ENCODE measurements at regions of chr19 and their contacts with region 1.

Region 1: GRCh38 chr19:52962394-52963246 is at the start of gene ZNF816:
- DNase-seq: peak; percentile 97 to 99 (median 97)
- H3K4me3 ChIP-seq: peak within 1 kb of the TSS; percentile 72 to 91
- H3K4me3 Mint-ChIP-seq: peak within 1 kb of the TSS; percentile 90 to 98 (median 93)
- H3K27ac ChIP-seq: peak within 1 kb of the TSS; percentile 51
- H3K27ac Mint-ChIP-seq: peak within 1 kb of the TSS; percentile 89 to 96 (median 92)
- H3K4me1 ChIP-seq: peaks cover 25% of the 10 kb centered on the region
- H3K4me1 Mint-ChIP-seq: peaks cover 13 to 34% (median 24%) of the 10 kb centered on the region in 4 donors
- H3K27me3 ChIP-seq: no peaks in the 10 kb centered on the region
- H3K27me3 Mint-ChIP-seq: peaks cover 0 to 1% of the 10 kb centered on the region in 2 donors
- total RNA-seq, gene ZNF816: 26.1 to 29.6 TPM

Region 2: GRCh38 chr19:52853880-52854279 is 108.7 kb before region 1 on chr19:
- CTCF ChIA-PET with region 1: no interaction called
- POLR2A ChIA-PET with region 1: no interaction called
- intact Hi-C with region 1: loop called (anchors 2 kb)
- DNase-seq: no peak
- H3K4me3 ChIP-seq: no peak overlapping the region
- H3K4me3 Mint-ChIP-seq: peak overlapping the region in 2 of 8 donors; percentile 9 to 53
- H3K27ac ChIP-seq: no peak overlapping the region
- H3K27ac Mint-ChIP-seq: no peak overlapping the region
- H3K4me1 ChIP-seq: peaks cover 4% of the 10 kb centered on the region
- H3K4me1 Mint-ChIP-seq: peaks cover 12 to 42% (median 19%) of the 10 kb centered on the region in 4 donors
- H3K27me3 ChIP-seq: no peaks in the 10 kb centered on the region
- H3K27me3 Mint-ChIP-seq: no peaks in the 10 kb centered on the region

Region 3: DNA sequence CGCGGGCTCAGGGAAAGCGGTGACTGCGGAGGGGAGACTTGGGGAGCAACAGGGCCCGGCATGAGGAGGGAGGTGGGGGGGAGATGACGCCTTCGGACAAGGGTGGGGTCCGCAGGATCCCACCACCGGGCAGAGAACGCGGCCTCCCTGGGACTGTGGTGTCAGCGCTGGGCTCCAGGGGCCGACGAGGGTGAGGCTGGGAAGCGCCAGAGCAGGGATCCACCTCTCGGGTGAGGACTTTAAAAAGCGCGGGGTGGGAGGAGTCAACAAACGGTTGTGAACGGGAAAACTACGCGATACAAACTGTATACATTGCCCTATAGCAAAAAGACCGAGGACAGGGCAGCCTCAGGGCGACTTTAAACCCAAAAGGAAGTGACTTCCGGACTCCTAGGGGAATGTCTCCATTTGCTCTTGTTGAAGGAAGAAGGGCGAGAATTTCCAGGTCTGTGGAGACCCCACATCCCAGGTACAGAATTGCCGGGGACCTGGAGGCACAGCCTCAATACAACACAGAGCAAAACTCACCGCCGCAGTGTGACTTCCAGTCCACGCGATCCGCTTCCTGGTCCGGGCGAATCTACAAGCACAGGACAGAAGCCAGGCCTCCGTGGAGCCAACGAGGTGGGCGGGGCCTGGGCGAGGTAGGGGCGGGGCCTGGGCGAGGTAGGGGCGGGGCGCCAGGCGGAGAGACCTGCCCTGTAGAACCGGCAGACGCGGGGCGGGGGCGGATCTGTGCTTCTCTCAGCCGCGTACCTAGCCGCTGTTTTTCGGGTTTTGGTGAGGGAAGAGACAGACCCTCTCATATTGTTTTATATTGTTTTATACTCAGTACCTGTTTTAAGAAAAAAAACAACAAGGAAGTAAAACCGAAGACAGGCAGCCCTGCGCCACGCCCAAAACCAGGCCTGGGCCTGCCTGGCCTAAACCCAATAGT is 39.5 kb before region 1 on chr19 and contains the start of gene ZNF888:
- CTCF ChIA-PET with region 1: no interaction called
- POLR2A ChIA-PET with region 1: no interaction called
- intact Hi-C with region 1: loop called (anchors 2 kb)
- DNase-seq: peak; percentile 77 to 88 (median 80)
- H3K4me3 ChIP-seq: peak within 1 kb of the TSS; percentile 58 to 85
- H3K4me3 Mint-ChIP-seq: peak within 1 kb of the TSS; percentile 87 to 99 (median 94)
- H3K27ac ChIP-seq: peak within 1 kb of the TSS; percentile 61
- H3K27ac Mint-ChIP-seq: peak within 1 kb of the TSS; percentile 88 to 95 (median 93)
- H3K4me1 ChIP-seq: peaks cover 14% of the 10 kb centered on the region
- H3K4me1 Mint-ChIP-seq: peaks cover 14 to 34% (median 25%) of the 10 kb centered on the region in 4 donors
- H3K27me3 ChIP-seq: no peaks in the 10 kb centered on the region
- H3K27me3 Mint-ChIP-seq: peaks cover 0 to 6% of the 10 kb centered on the region in 2 donors
- total RNA-seq, gene ZNF888: 10.7 to 11.4 TPM

Region 4: DNA sequence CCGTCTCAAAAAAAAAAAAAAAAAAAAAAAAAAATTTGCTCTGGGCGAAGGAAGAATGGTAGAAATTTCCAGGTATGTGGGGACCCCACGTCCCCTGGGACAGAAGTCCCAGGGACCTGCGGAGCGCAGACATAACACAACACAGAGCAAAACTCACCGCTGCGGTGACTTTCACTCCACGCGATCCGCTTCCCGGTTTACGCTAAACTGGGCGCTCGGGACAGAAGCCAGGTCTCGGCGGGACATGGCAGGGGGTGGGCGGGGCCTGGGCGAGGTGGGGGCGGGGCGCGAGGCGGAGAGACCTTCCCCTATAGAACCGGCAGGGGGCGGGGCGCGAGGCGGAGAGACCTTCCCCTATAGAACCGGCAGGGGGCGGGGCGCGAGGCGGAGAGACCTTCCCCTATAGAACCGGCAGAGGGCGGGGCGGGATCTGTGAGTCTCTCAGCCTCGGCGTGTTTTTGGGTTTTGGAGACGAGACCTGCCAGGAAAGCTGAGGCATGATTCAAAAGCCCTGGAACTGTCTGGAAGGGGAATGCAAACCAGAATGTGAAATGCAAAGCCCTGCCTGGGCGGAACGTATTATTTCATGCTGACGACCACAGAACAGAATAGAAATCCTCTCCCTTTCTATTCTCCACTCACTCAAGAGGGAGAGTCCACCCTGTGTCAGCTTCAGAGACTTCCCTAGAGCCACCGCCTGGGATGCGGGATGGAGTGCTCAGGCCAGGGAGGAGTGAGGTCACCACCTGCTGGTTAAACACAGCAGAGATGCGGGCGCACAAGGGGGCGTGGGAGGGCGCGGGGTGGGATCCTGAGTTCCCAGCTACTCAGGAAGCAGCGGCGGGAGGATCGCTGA is 30.9 kb after region 1 on chr19:
- CTCF ChIA-PET with region 1: interaction called, 6 read pairs
- POLR2A ChIA-PET with region 1: interaction called, 5 read pairs
- intact Hi-C with region 1: loop called (anchors 1 kb)
- DNase-seq: peak; percentile 77 to 90 (median 83)
- H3K4me3 ChIP-seq: peak overlapping the region; percentile 49 to 81
- H3K4me3 Mint-ChIP-seq: peak overlapping the region; percentile 69 to 96 (median 90)
- H3K27ac ChIP-seq: no peak overlapping the region
- H3K27ac Mint-ChIP-seq: peak overlapping the region in 6 of 7 donors; percentile 27 to 86 (median 68)
- H3K4me1 ChIP-seq: peaks cover 14% of the 10 kb centered on the region
- H3K4me1 Mint-ChIP-seq: peaks cover 3 to 23% (median 18%) of the 10 kb centered on the region in 4 donors
- H3K27me3 ChIP-seq: no peaks in the 10 kb centered on the region
- H3K27me3 Mint-ChIP-seq: peaks cover 5 to 9% of the 10 kb centered on the region in 2 donors

Region 5: GRCh38 chr19:53365134-53365898 is 402.7 kb after region 1 on chr19 and contains the start of gene ZNF525:
- CTCF ChIA-PET with region 1: no interaction called
- POLR2A ChIA-PET with region 1: no interaction called
- intact Hi-C with region 1: loop called (anchors 1 kb)
- DNase-seq: peak; percentile 93 to 97 (median 96)
- H3K4me3 ChIP-seq: peak within 1 kb of the TSS; percentile 57 to 87
- H3K4me3 Mint-ChIP-seq: peak within 1 kb of the TSS; percentile 95 to 99 (median 96)
- H3K27ac ChIP-seq: peak within 1 kb of the TSS; percentile 70
- H3K27ac Mint-ChIP-seq: peak within 1 kb of the TSS; percentile 90 to 98 (median 97)
- H3K4me1 ChIP-seq: peaks cover 6% of the 10 kb centered on the region
- H3K4me1 Mint-ChIP-seq: peaks cover 15 to 38% (median 21%) of the 10 kb centered on the region in 4 donors
- H3K27me3 ChIP-seq: no peaks in the 10 kb centered on the region
- H3K27me3 Mint-ChIP-seq: no peaks in the 10 kb centered on the region
- total RNA-seq, gene ZNF525: 36.5 to 36.6 TPM